Calu3 (cell line): ENCODE measurements at regions of chr1 and their contacts with region 1.

Region 1: DNA sequence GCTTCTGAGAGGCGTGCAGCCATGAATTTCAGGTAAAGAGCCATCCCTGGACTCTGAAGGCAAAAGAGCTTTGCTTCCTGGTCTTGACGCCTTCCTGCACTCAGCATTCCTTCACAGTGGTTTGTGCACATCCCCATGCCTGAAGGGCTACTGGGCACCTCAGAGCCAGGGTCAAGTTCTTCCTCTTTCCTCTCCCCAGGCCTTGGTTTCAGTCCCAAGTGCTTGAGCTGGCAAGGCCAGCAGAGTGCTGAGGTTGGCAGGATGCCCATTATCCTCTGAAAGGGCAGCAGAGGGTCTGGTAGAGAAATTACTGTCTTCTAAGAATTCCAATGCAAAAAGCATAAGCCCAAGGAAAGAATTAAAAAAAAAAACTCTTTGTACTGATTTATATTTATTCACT is 1064.9 kb downstream of the TTLL7 start:
- DNase-seq: no peak
- H3K4me3 Mint-ChIP-seq: no peak overlapping the region
- H3K27ac Mint-ChIP-seq: no peak overlapping the region
- H3K4me1 Mint-ChIP-seq: no peaks in the 10 kb centered on the region
- H3K27me3 Mint-ChIP-seq: no peaks in the 10 kb centered on the region
- CTCF ChIP-seq: no peak

Region 2: DNA sequence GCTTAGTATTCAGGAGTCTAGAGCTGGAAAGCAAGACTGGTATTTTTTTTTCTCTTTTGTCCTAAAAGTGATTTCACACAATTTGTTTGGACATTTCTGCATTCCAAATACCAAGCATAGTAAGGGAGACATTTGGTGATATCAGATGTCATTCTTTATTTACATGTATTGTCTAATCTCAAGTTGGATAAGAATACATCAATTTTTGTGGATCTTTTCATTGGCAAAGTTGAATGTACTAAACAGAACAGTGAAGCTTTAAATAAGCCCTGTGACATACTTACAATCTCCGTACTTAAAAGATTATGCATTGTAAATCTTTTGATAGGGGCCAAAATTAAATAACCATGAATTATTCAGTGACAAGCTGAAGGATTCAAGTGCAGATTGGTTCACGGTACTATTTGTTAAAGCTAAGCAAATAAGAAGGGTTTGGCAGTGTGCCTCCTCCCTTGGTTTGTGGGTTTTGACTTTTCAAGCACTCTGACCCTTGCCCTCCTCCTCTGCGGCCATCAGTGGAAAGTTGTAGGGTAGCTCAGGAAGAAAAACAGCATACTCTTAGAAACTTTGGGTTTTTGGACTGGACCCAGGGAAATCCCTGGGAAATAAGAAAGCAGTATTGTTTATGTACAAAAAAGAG is 469.6 kb before region 1 on chr1:
- CTCF ChIA-PET with region 1: no interaction called
- intact Hi-C with region 1: no loop called
- DNase-seq: peak; percentile 1
- H3K4me3 Mint-ChIP-seq: no peak overlapping the region
- H3K27ac Mint-ChIP-seq: no peak overlapping the region
- H3K4me1 Mint-ChIP-seq: no peaks in the 10 kb centered on the region
- H3K27me3 Mint-ChIP-seq: no peaks in the 10 kb centered on the region
- CTCF ChIP-seq: no peak

Region 3: GRCh38 chr1:82920418-82921248 is 13.4 kb before region 1 on chr1:
- CTCF ChIA-PET with region 1: no interaction called
- intact Hi-C with region 1: no loop called
- DNase-seq: peak; percentile 11
- H3K4me3 Mint-ChIP-seq: no peak overlapping the region
- H3K27ac Mint-ChIP-seq: no peak overlapping the region
- H3K4me1 Mint-ChIP-seq: peaks cover 15% of the 10 kb centered on the region
- H3K27me3 Mint-ChIP-seq: no peaks in the 10 kb centered on the region
- CTCF ChIP-seq: no peak

Region 4: GRCh38 chr1:82994616-82995263 is 60.7 kb after region 1 on chr1:
- CTCF ChIA-PET with region 1: no interaction called
- intact Hi-C with region 1: loop called (anchors 10 kb)
- DNase-seq: no peak
- H3K4me3 Mint-ChIP-seq: no peak overlapping the region
- H3K27ac Mint-ChIP-seq: no peak overlapping the region
- H3K4me1 Mint-ChIP-seq: no peaks in the 10 kb centered on the region
- H3K27me3 Mint-ChIP-seq: no peaks in the 10 kb centered on the region
- CTCF ChIP-seq: no peak

Region 5: GRCh38 chr1:84632673-84633434 is 1698.8 kb after region 1 on chr1:
- CTCF ChIA-PET with region 1: interaction called, 10 read pairs
- intact Hi-C with region 1: no loop called
- DNase-seq: peak; percentile 30
- H3K4me3 Mint-ChIP-seq: no peak overlapping the region
- H3K27ac Mint-ChIP-seq: peak overlapping the region; percentile 78
- H3K4me1 Mint-ChIP-seq: peaks cover 30% of the 10 kb centered on the region
- H3K27me3 Mint-ChIP-seq: no peaks in the 10 kb centered on the region
- CTCF ChIP-seq: no peak